PC-9 (cell line): ENCODE measurements at regions of chr9 and their contacts with region 1.

Region 1: GRCh38 chr9:137983950-137984349 is 106.4 kb downstream of the CACNA1B start:
- DNase-seq: no peak
- H3K4me3 ChIP-seq: no peak overlapping the region
- H3K27ac ChIP-seq: no peak overlapping the region
- H3K4me1 ChIP-seq: no peaks in the 10 kb centered on the region
- H3K27me3 ChIP-seq: peaks cover 49% of the 10 kb centered on the region
- CTCF ChIP-seq: no peak

Region 2: DNA sequence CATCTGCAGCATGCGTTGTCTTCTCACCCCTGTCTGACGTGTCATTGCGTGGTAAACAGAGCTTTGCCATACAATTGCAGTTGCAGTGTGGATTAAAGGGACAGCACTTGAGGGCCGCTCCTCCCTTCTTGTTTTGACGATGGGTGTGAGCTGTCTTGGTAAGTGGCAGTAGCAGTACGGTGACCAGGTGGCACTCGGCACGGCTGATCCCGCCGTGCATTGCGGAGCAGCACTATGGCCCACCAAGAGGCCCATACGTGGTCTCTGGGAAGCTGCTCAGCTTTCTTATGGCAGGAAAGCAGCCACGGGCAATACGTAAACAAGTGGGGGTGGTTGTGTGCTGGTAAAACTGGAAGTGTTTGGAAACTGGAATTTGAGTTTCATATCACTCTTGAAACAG is 340.0 kb before region 1 on chr9:
- CTCF ChIA-PET with region 1: interaction called, 19 read pairs
- POLR2A ChIA-PET with region 1: no interaction called
- intact Hi-C with region 1: no loop called
- DNase-seq: no peak
- H3K4me3 ChIP-seq: no peak overlapping the region
- H3K27ac ChIP-seq: no peak overlapping the region
- H3K4me1 ChIP-seq: no peaks in the 10 kb centered on the region
- H3K27me3 ChIP-seq: no peaks in the 10 kb centered on the region
- CTCF ChIP-seq: no peak